Activated T-helper 2 cell treated with anti-CD3 and anti-CD28 coated beads, Interferon-gamma antibody, Interleukin-2, Interleukin-4, amounts not matched to agents 10 μg/mL and 5 μg/mL and 100 μg/mL, durations not matched to agents 14 hours and 24 hours and 36 hours (primary cell): ENCODE measurements at regions of chr20 and their contacts with region 1.

Region 1: DNA sequence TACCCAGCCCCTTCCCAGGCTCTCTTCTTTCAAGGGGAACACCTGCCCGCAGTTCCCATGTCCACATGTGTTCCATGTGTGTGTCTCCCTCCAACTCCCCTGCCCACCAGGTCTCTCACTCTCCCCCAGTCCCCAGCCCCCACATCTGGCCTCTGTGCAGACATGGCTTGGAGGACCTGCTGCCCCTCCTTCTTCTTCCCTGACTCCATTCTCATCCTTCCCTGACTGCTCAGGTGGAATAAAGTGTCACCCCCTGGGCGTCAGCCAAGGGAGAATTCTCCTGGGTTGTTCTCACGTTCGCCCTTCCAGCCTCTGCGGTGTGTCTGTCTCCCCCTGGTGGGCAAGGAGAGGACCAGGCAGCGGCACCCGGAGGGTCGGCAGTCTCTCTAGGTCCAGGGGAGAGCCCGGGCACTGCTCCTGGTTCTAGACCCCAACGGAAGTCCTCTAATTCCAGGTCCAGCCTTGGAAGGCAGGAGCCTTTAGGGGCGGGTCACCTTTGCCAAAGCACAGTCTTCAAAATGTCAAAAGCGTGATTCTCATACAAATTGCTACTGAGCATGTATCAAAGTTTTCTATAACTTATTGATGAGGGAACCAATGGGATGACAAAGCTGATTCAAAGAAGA is 50.5 kb downstream of the EBF4 start:
- DNase-seq: peak; percentile 59
- H3K4me3 Mint-ChIP-seq: peak overlapping the region; percentile 68
- H3K27ac Mint-ChIP-seq: peak overlapping the region; percentile 70
- H3K4me1 Mint-ChIP-seq: peaks cover 27% of the 10 kb centered on the region
- H3K27me3 Mint-ChIP-seq: peaks cover 17% of the 10 kb centered on the region

Region 2: DNA sequence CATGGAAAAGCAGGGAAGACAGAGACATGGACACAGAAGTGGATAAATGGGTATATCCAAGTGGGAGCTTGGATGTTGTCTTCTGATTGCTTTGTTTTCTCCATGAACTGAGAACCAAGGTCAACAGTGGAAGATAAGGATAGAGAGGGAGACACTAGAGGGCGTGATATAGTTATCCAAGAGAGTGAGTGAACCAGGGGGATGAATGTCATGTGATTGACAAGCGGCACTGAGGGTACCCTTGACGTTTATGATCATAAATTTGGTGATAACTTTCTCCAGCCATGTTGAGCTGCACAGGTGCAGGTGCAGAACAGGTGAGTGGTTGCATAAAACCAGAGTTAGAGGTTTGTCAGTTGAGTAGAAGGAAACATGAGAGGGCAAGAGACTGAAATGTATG is 29.8 kb before region 1 on chr20:
- intact Hi-C with region 1: loop called (anchors 2 kb)
- DNase-seq: no peak
- H3K4me3 Mint-ChIP-seq: no peak overlapping the region
- H3K27ac Mint-ChIP-seq: no peak overlapping the region
- H3K4me1 Mint-ChIP-seq: no peaks in the 10 kb centered on the region
- H3K27me3 Mint-ChIP-seq: peaks cover 6% of the 10 kb centered on the region

Region 3: GRCh38 chr20:2780948-2781347 is 37.9 kb after region 1 on chr20:
- intact Hi-C with region 1: no loop called
- DNase-seq: no peak
- H3K4me3 Mint-ChIP-seq: no peak overlapping the region
- H3K27ac Mint-ChIP-seq: no peak overlapping the region
- H3K4me1 Mint-ChIP-seq: peaks cover 3% of the 10 kb centered on the region
- H3K27me3 Mint-ChIP-seq: peaks cover 21% of the 10 kb centered on the region